ENCODE measurements at regions of chr16 and their contacts with region 1.

Region 1: DNA sequence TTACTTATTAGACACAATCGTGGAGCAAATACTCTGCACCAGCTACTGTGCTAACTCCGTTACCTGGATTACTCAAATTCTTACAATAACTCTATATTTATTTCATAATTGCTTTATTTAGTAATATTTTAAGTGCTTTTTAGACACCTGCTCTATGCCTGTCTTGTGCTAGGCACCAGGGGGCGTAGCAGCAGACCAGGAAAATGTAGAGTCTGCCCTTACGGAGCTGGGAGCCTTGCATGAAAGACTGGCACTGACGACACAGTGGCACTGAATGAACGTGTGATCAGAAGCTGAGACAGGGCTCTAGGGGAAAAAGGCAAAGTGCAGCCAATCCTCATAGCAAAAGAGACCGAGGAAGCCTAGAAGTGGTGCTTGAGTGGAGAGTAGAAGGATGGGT is 486.5 kb downstream of the CDH13 start:
- DNase-seq: peak; percentile 39
- H3K4me3 ChIP-seq: no peak overlapping the region
- H3K27ac ChIP-seq: no peak overlapping the region
- H3K4me1 ChIP-seq: no peaks in the 10 kb centered on the region
- H3K27me3 ChIP-seq: no peaks in the 10 kb centered on the region
- CTCF ChIP-seq: peak; percentile 52 to 58
- POLR2A ChIP-seq: no peak

Region 2: DNA sequence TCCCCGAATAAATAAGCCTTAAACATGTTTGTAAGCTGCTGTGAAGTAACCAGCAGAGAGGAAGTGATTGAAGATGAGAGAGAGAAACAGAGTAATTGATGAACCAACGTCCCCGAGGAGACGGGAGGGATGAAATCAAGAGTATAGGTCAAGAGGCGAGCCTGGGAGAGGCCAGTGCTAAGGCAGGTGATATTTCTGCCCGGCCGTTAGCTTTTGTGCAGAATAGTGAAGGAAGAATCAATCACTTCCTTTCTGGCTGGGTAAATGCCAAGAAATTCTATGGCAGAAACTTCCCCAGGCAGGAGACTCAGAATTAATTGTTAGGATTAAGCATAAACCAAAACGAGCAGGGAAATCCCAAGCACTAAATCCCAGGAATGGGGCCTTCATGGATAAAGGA is 212.8 kb before region 1 on chr16:
- CTCF ChIA-PET with region 1: no interaction called
- POLR2A ChIA-PET with region 1: no interaction called
- dilution Hi-C with region 1: no loop called
- intact Hi-C with region 1: no loop called
- DNase-seq: peak; percentile 63
- H3K4me3 ChIP-seq: no peak overlapping the region
- H3K27ac ChIP-seq: no peak overlapping the region
- H3K4me1 ChIP-seq: peaks cover 11% of the 10 kb centered on the region
- H3K27me3 ChIP-seq: no peaks in the 10 kb centered on the region
- CTCF ChIP-seq: no peak
- POLR2A ChIP-seq: no peak

Region 3: GRCh38 chr16:82911925-82912324 is 201.4 kb before region 1 on chr16:
- CTCF ChIA-PET with region 1: no interaction called
- POLR2A ChIA-PET with region 1: no interaction called
- dilution Hi-C with region 1: no loop called
- intact Hi-C with region 1: no loop called
- DNase-seq: no peak
- H3K4me3 ChIP-seq: no peak overlapping the region
- H3K27ac ChIP-seq: no peak overlapping the region
- H3K4me1 ChIP-seq: peaks cover 3% of the 10 kb centered on the region
- H3K27me3 ChIP-seq: no peaks in the 10 kb centered on the region
- CTCF ChIP-seq: no peak
- POLR2A ChIP-seq: no peak

Region 4: DNA sequence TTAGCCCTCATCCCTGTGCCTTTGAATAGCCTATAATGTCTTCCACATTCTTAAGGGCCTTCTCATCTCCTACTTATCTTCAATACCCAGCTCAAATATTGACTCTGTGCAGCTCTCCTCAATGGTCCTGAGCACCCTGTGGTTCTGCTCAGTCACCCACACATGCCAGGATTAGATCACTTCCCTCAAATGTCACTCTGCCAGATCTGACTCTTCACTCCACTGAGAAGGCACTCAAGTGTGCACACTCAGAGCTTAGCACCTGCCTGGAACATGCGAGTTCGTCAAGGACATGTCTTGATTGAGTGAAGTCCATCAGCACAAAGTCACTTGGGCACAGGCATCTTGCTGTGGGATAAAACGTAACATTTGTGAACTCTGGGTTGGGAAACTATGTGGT is 81.8 kb before region 1 on chr16:
- CTCF ChIA-PET with region 1: no interaction called
- POLR2A ChIA-PET with region 1: no interaction called
- dilution Hi-C with region 1: no loop called
- intact Hi-C with region 1: no loop called
- DNase-seq: no peak
- H3K4me3 ChIP-seq: no peak overlapping the region
- H3K27ac ChIP-seq: no peak overlapping the region
- H3K4me1 ChIP-seq: peaks cover 5% of the 10 kb centered on the region
- H3K27me3 ChIP-seq: no peaks in the 10 kb centered on the region
- CTCF ChIP-seq: no peak
- POLR2A ChIP-seq: no peak

Region 5: DNA sequence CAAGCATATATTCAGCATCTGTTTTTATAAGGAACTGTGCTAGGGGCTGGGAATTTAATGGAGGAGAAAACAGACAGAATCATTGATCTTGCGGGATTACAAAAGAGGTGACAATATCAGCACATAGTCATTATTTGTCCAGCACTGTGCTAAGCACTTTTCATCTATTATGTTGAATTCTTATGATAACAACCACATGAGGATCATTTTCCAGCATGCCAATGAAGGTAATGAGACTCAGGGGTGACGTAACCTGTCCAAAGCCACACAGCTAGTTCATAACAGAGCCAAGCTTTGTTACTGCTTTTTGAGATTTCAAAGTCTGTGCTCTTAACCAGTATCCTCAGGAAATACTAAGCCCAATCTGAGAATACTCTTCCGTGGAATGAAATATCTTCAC is 16.7 kb after region 1 on chr16:
- CTCF ChIA-PET with region 1: interaction called, 12 read pairs
- POLR2A ChIA-PET with region 1: no interaction called
- dilution Hi-C with region 1: no loop called
- intact Hi-C with region 1: no loop called
- DNase-seq: no peak
- H3K4me3 ChIP-seq: no peak overlapping the region
- H3K27ac ChIP-seq: no peak overlapping the region
- H3K4me1 ChIP-seq: no peaks in the 10 kb centered on the region
- H3K27me3 ChIP-seq: no peaks in the 10 kb centered on the region
- CTCF ChIP-seq: no peak
- POLR2A ChIP-seq: no peak

Region 6: DNA sequence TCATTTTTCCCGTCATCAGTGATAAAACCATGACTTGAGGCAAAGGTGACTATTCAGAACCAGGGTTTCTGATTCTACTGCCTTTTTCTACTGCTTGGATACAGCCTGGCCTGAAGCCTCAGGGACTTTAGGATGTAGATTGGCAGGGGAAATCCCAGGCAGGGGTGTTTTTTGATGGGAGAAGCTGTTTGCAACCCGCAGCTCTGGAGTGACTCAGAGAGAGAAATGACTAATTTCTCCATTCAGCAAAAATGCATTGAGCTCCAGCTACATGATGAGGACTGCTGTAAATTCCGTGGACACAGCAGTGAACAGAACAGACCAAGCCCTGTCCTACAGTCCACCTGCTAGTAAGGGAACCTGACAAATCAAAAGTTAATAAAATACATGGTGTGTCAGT is 74.1 kb after region 1 on chr16:
- CTCF ChIA-PET with region 1: interaction called, 6 read pairs
- POLR2A ChIA-PET with region 1: no interaction called
- dilution Hi-C with region 1: no loop called
- intact Hi-C with region 1: loop called (anchors 5 kb)
- DNase-seq: peak; percentile 53
- H3K4me3 ChIP-seq: no peak overlapping the region
- H3K27ac ChIP-seq: no peak overlapping the region
- H3K4me1 ChIP-seq: no peaks in the 10 kb centered on the region
- H3K27me3 ChIP-seq: no peaks in the 10 kb centered on the region
- CTCF ChIP-seq: no peak
- POLR2A ChIP-seq: no peak

Region 7: GRCh38 chr16:83356266-83356665 is 242.9 kb after region 1 on chr16:
- CTCF ChIA-PET with region 1: interaction called, 23 read pairs
- POLR2A ChIA-PET with region 1: no interaction called
- dilution Hi-C with region 1: no loop called
- intact Hi-C with region 1: loop called (anchors 2 kb)
- DNase-seq: peak; percentile 70
- H3K4me3 ChIP-seq: no peak overlapping the region
- H3K27ac ChIP-seq: no peak overlapping the region
- H3K4me1 ChIP-seq: no peaks in the 10 kb centered on the region
- H3K27me3 ChIP-seq: no peaks in the 10 kb centered on the region
- CTCF ChIP-seq: peak; percentile 72 to 74
- POLR2A ChIP-seq: no peak

Region 8: DNA sequence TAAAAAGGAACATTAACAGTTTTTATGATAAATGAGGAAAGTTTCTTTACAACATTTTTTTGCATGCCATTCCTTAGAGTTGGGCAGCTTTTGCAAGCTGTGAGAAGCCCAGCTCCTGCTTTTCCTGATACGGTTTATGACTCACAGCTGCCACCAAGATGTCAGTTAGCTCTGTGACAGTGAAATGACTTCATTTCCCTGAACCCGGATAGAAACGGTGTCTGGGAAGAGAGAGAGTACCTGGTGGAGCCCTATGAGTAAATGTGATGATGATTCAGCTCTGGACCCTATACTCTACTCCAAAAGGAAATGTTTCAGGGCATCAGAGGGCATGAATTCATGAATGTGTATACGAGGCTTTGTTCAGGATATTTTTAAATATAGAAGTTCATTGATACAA is 328.2 kb after region 1 on chr16:
- CTCF ChIA-PET with region 1: interaction called, 57 read pairs
- POLR2A ChIA-PET with region 1: no interaction called
- dilution Hi-C with region 1: no loop called
- intact Hi-C with region 1: loop called (anchors 1 kb)
- DNase-seq: peak; percentile 22
- H3K4me3 ChIP-seq: no peak overlapping the region
- H3K27ac ChIP-seq: no peak overlapping the region
- H3K4me1 ChIP-seq: no peaks in the 10 kb centered on the region
- H3K27me3 ChIP-seq: no peaks in the 10 kb centered on the region
- CTCF ChIP-seq: no peak
- POLR2A ChIP-seq: no peak